Psoas muscle (tissue), 8 donors: ENCODE measurements at regions of chr4 and their contacts with region 1.

Region 1: GRCh38 chr4:103067841-103068547 is 8.6 kb downstream of the SLC9B2 start:
- DNase-seq: no peak
- ATAC-seq: no peak
- H3K4me3 ChIP-seq: no peak overlapping the region
- H3K27ac ChIP-seq: no peak overlapping the region
- H3K4me1 ChIP-seq: no peaks in the 10 kb centered on the region
- H3K27me3 ChIP-seq: no peaks in the 10 kb centered on the region
- CTCF ChIP-seq: no peak

Region 2: DNA sequence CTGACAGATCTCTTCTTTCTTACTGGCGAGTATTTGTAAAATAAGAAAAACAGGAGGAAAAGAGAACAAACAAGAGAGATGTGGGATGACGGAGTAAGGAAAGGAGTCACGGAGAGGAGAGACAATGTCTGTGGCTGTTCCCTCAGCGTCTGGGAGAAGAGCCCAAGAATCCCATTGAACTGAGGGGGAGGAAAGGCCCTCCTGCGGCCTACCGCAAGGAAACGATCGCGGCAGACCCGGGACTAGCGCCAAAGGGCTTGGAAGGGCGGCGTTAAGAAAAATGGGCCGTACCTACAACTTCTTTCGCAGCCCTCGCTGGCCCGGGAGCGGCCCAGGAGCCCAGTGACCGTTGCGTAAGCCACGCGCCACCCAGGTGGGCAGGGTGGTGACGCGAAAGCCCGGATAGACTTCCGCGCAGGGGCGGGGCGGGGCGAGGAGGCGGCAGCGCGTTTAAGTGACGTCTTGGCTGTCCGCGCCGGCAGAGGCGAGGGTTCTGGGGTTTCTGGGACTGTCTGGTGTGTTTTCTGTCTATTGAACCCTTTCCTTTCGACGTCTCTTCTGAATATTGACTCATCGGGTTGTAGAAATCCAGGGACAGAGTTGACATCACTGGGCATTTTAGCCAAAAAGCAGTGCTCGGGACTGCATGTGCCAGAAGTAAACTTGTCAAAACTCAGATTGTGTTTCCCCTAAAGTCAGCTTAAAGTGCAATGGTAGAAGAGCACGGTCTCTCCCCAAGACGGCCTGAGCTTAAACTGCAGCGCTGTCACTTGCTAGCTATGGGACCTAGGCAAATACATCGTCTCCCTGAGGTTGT is 48.5 kb before region 1 on chr4 and contains the start of gene SLC9B1:
- intact Hi-C with region 1: loop called in 1 of 2 experiments (anchors 5 kb)
- DNase-seq: peak; percentile 98
- ATAC-seq: peak; percentile 97 to 99 (median 98)
- H3K4me3 ChIP-seq: peak within 1 kb of the TSS; percentile 63
- H3K27ac ChIP-seq: peak within 1 kb of the TSS; percentile 92
- H3K4me1 ChIP-seq: peaks cover 6% of the 10 kb centered on the region
- H3K27me3 ChIP-seq: no peaks in the 10 kb centered on the region
- CTCF ChIP-seq: no peak
- total RNA-seq, gene SLC9B1: 1.6 TPM in 1 of 4 donors, not detected in the others